PC-9 (cell line): ENCODE measurements at regions of chr4 and their contacts with region 1.

Region 1: DNA sequence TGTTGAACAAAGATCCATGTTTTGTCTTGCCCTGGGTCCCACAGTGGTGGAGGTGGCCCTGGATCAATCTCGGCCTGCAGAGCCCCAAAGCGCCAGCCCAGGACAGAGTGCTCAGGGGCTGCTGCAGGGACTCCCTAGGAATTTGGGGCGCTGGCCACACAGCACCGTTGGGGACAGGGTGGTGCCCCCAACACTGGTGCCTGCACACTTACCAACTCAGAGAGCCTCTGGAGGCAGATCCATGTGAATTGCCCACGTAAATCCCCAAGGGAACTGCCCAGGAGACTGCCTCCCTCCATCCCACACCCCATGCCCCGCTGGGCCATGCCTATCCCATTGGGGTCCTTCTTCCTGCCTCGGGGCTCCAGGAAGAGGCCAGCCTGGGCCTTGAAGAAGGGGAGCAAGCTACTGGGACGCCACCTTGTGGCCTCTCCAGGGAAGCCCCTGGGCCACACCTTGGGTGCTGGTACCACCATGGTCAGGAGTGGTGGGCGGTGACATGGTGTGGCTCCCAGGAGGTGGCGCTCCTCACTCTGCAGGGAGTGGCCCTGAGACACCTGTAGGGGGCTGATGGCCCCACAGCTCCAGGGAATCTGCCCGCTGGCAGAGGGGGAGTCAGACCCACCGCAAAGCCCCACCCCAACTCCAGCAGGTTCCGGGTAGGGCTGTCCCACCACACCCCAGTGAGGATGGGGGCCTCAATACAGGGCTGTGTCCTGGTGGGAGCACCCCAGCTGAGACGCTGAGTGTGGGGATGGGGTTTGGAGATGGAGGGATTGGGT is 22.8 kb downstream of the CFAP99 start:
- DNase-seq: peak; percentile 38 to 70
- H3K4me3 ChIP-seq: no peak overlapping the region
- H3K27ac ChIP-seq: no peak overlapping the region
- H3K4me1 ChIP-seq: no peaks in the 10 kb centered on the region
- H3K27me3 ChIP-seq: peaks cover 30% of the 10 kb centered on the region
- CTCF ChIP-seq: peak; percentile 73

Region 2: GRCh38 chr4:2220016-2220630 is 221.5 kb before region 1 on chr4:
- CTCF ChIA-PET with region 1: interaction called, 9 read pairs
- POLR2A ChIA-PET with region 1: no interaction called
- intact Hi-C with region 1: loop called (anchors 1 kb)
- DNase-seq: peak; percentile 60 to 73
- H3K4me3 ChIP-seq: no peak overlapping the region
- H3K27ac ChIP-seq: no peak overlapping the region
- H3K4me1 ChIP-seq: peaks cover 14% of the 10 kb centered on the region
- H3K27me3 ChIP-seq: no peaks in the 10 kb centered on the region
- CTCF ChIP-seq: peak; percentile 89

Region 3: DNA sequence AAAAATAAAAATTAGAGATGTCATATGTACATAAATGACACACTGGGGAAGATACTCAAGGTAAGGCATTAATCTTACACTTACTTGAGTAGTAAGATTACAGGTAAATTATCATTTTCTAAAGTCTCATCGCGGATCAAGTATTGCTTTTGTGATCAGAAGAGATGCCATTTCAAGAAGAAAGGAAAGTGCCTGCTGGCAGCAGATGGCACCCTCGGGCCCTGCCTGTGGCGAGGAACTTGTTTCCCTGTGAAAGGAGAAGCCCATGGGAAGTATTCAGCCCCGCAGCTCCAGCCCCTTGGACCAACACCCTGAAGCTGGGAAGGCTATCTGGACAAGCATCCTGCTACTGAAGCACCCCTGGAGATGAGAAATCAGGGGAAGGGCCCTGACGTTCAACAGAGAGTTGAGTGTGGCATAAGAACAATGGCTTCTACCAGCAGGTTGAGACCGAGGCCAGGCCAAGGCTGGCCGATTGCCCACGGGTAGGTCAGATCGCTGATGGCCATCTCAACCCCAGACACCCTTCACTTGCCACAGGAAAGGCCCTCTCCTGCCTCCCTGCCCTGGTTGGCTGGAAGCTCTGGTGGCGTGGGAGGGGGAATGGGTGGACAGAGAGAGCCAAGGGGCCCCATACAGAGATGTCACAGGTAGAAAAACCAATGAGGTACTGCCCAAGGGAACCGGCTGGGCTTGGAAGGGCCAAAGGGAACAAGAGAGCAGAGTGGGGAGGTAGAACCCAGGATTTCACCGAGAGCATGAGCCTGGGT is 160.9 kb before region 1 on chr4:
- CTCF ChIA-PET with region 1: no interaction called
- POLR2A ChIA-PET with region 1: no interaction called
- intact Hi-C with region 1: loop called (anchors 1 kb)
- DNase-seq: no peak
- H3K4me3 ChIP-seq: no peak overlapping the region
- H3K27ac ChIP-seq: no peak overlapping the region
- H3K4me1 ChIP-seq: no peaks in the 10 kb centered on the region
- H3K27me3 ChIP-seq: peaks cover 24% of the 10 kb centered on the region
- CTCF ChIP-seq: no peak; the same call in 1 of the 2 replicates